BJ (cell line): ENCODE measurements at regions of chr3 and their contacts with region 1.

Region 1: GRCh38 chr3:49802719-49803464 is at the start of gene INKA1:
- DNase-seq: no peak
- H3K4me3 ChIP-seq: peak within 1 kb of the TSS; percentile 79
- H3K27me3 ChIP-seq: no peaks in the 10 kb centered on the region
- CTCF ChIP-seq: peak; percentile 92
- polyA plus RNA-seq, gene INKA1: 3.1 and 4.4 TPM in 2 replicates

Region 2: DNA sequence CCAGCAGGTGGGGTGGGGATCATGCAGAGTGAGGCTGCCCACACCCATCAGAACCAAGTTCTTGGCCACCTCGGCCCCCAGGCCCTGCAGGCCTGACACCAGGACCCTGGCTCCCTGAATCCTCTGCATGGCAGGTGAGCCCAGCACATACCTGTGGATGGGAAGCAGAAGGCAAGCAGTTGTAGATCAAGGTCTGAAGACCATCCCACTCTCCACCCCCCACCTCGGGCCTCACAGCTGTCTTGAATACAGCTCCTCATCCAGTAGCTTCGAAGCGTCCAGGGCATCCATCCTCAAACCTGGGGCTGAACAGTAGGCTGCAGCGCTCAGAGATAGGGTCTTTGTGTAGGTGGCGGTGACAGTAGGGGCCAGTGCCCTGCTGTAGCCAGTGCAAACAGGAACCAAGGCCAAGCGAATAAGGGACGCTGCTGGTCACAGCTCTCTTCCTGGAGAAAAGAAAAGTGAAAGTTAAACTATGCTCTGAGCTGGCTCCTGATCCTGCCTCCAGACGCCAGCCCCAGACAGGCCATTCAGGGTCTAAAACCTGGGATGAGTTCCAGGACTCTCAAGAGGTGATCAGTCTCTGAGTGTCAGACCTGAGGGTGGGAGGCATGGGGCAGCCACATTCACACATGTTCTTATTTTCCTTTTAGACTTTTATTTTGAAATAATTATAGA is 10.7 kb after region 1 on chr3 and contains the start of gene UBA7:
- CTCF ChIA-PET with region 1: interaction called, 22 read pairs
- POLR2A ChIA-PET with region 1: no interaction called
- DNase-seq: no peak
- H3K4me3 ChIP-seq: peak within 1 kb of the TSS; percentile 49
- H3K27me3 ChIP-seq: no peaks in the 10 kb centered on the region
- CTCF ChIP-seq: no peak
- polyA plus RNA-seq, gene UBA7: 32.9 and 62.5 TPM in 2 replicates

Region 3: DNA sequence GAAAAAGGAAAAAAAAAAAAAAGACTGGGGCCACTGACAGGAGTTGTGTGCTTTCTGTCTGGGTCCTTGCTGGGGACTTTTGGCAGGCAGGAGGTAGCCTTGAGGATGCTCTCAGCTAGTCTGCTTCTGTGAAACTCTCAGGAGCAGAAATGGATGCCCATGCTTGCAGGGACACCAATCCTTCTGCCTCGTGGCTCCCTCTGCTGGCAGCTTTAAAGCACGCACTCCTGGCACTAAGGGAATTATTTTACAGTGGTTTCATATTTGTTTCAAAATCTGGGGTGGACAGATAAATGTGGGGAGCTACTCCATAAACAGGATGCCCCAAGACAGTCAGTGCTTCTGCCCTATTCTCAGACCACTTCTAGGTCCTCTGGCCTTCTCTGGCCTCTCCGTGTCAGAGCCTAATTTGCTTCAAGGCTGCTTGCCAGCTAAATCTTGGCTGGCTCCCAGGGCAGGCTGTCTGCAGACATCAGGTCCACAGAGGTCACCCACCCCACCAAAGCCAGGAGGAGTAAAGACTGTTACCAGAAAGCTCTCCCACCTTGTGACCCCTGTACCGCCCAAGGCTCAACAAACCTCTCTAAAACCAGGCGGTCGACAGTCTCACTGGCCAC is 36.4 kb after region 1 on chr3:
- CTCF ChIA-PET with region 1: interaction called, 287 read pairs
- POLR2A ChIA-PET with region 1: no interaction called
- DNase-seq: peak; percentile 16
- H3K4me3 ChIP-seq: no peak overlapping the region
- H3K27me3 ChIP-seq: no peaks in the 10 kb centered on the region
- CTCF ChIP-seq: peak; percentile 89

Region 4: DNA sequence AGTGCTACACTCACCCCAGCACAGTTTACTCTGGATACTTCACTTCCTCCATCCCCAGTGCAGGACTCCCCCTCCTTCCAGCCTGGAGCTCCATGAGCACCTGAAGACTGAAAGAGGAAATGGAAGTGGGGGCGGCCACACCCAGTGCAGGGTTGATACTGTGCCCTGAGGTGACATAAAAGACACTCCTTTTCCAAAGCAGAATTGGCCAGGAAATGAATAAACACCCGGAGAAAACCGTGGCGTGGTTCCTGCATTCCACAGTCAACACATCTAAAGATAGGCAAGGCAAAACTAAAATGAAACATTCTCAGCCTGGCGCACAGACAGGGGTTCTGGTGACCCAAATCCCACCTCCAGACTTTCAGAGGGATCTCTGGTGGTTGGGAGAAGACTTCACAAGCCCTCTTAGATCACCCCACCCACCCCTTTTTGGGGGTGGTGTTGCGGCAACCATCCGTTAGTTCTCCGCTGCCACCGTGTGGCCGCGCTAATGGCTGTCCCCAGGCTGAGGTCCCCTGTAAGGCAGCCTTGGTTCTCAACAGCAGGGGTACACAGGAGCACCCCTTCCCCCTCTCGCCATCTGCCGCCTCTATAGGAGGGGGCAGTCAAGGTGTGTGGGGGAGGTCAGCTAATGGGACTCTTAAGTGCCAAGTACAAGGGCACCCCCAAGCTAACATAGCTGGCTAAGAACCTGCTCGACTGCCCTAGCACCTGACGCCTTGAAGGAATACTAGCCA is 103.3 kb after region 1 on chr3:
- CTCF ChIA-PET with region 1: interaction called, 43 read pairs
- POLR2A ChIA-PET with region 1: interaction called, 5 read pairs
- DNase-seq: no peak
- H3K4me3 ChIP-seq: peak overlapping the region; percentile 19; the same call in 1 of the 2 replicates
- H3K27me3 ChIP-seq: no peaks in the 10 kb centered on the region
- CTCF ChIP-seq: peak; percentile 85